CD4-positive, alpha-beta T cell (primary cell): ENCODE measurements at regions of chr17 and their contacts with region 1.

Region 1: DNA sequence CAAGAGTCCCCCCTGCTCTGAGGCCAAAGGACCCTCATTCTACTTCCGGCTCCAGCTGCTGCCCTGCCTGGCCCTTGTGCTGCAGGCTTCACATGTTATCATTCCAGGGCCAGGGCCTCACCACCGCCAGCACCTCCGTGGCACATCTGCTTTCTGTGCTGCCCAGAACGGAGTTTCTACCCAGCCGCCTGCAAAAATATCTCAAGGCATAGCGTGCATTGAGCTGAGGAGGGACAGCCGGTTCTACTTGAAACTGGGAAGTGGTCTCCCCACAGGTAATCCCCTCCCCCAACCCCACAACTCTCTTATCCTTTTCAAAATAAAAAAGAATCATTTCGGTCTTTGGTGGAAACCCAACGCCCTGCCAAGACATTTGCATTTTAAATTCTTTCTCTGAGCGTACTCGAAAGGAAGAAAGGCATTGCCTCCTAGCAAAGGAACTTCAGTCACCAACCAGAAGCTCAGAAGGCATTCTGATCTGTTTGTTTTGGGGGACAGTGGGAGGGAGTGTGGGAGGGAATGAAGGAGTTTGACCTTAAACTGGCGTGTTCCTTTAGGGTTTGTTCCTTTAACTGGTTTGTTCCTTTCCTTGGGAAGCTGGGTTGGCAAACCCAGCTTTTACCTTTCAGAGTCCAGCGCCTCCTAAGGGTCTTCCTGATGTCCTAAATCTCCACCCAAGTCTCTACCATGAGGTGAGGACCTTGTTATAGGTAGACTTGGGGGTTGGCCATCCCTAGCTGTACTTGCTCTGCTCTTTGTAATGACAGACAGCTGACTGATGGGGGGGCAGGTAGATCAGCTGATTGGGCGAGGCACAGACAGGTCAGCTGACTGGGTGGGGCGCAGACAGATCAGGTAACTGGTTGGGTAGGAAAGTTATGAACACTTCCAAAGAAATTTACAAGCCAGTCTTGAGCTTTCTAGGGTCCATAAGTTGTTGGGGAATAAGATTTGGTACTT is 33.4 kb upstream of the PIK3R6 start:
- DNase-seq: peak in 6 of 14 experiments; percentile 29 to 65 (median 45)
- ATAC-seq: no peak
- H3K4me3 ChIP-seq: no peak overlapping the region
- H3K4me3 Mint-ChIP-seq: peak overlapping the region; percentile 9
- H3K27ac ChIP-seq: peak overlapping the region; percentile 39 to 54
- H3K27ac Mint-ChIP-seq: peak overlapping the region; percentile 93
- H3K4me1 ChIP-seq: peaks cover 63% of the 10 kb centered on the region
- H3K4me1 Mint-ChIP-seq: peaks cover 61% of the 10 kb centered on the region
- H3K27me3 ChIP-seq: no peaks in the 10 kb centered on the region
- H3K27me3 Mint-ChIP-seq: no peaks in the 10 kb centered on the region
- CTCF ChIP-seq: no peak

Region 2: GRCh38 chr17:8941520-8941919 is 40.6 kb after region 1 on chr17:
- CTCF ChIA-PET with region 1: interaction called, 6 read pairs
- POLR2A ChIA-PET with region 1: interaction called, 26 read pairs
- intact Hi-C with region 1: loop called in 1 of 2 experiments (anchors 5 kb)
- DNase-seq: peak; percentile 44 to 88 (median 62)
- ATAC-seq: peak; percentile 63
- H3K4me3 ChIP-seq: peak overlapping the region; percentile 21
- H3K4me3 Mint-ChIP-seq: peak overlapping the region; percentile 56
- H3K27ac ChIP-seq: peak overlapping the region; percentile 44 to 56
- H3K27ac Mint-ChIP-seq: peak overlapping the region; percentile 94
- H3K4me1 ChIP-seq: peaks cover 68% of the 10 kb centered on the region
- H3K4me1 Mint-ChIP-seq: peaks cover 93% of the 10 kb centered on the region
- H3K27me3 ChIP-seq: no peaks in the 10 kb centered on the region
- H3K27me3 Mint-ChIP-seq: no peaks in the 10 kb centered on the region
- CTCF ChIP-seq: no peak

Region 3: GRCh38 chr17:8954339-8954738 is 53.4 kb after region 1 on chr17:
- CTCF ChIA-PET with region 1: interaction called, 5 read pairs
- POLR2A ChIA-PET with region 1: interaction called, 29 read pairs
- intact Hi-C with region 1: loop called in 1 of 2 experiments (anchors 1 kb)
- DNase-seq: peak; percentile 62 to 95 (median 76)
- ATAC-seq: peak; percentile 94
- H3K4me3 ChIP-seq: peak overlapping the region; percentile 19
- H3K4me3 Mint-ChIP-seq: peak overlapping the region; percentile 80
- H3K27ac ChIP-seq: peak overlapping the region; percentile 66 to 77
- H3K27ac Mint-ChIP-seq: peak overlapping the region; percentile 92
- H3K4me1 ChIP-seq: peaks cover 80% of the 10 kb centered on the region
- H3K4me1 Mint-ChIP-seq: peaks cover 94% of the 10 kb centered on the region
- H3K27me3 ChIP-seq: no peaks in the 10 kb centered on the region
- H3K27me3 Mint-ChIP-seq: no peaks in the 10 kb centered on the region
- CTCF ChIP-seq: no peak

Region 4: GRCh38 chr17:9195961-9196716 is 295.2 kb after region 1 on chr17:
- CTCF ChIA-PET with region 1: no interaction called
- POLR2A ChIA-PET with region 1: no interaction called
- intact Hi-C with region 1: no loop called
- DNase-seq: no peak
- ATAC-seq: no peak
- H3K4me3 ChIP-seq: no peak overlapping the region
- H3K4me3 Mint-ChIP-seq: no peak overlapping the region
- H3K27ac ChIP-seq: no peak overlapping the region
- H3K27ac Mint-ChIP-seq: no peak overlapping the region
- H3K4me1 ChIP-seq: no peaks in the 10 kb centered on the region
- H3K4me1 Mint-ChIP-seq: no peaks in the 10 kb centered on the region
- H3K27me3 ChIP-seq: no peaks in the 10 kb centered on the region
- H3K27me3 Mint-ChIP-seq: no peaks in the 10 kb centered on the region
- CTCF ChIP-seq: no peak